Cardiac septum (tissue), 1 donor: ENCODE measurements at regions of chr4 and their contacts with region 1.

Region 1: GRCh38 chr4:8320386-8320750 is 50.8 kb downstream of the HTRA3 start:
- DNase-seq: no peak

Region 2: DNA sequence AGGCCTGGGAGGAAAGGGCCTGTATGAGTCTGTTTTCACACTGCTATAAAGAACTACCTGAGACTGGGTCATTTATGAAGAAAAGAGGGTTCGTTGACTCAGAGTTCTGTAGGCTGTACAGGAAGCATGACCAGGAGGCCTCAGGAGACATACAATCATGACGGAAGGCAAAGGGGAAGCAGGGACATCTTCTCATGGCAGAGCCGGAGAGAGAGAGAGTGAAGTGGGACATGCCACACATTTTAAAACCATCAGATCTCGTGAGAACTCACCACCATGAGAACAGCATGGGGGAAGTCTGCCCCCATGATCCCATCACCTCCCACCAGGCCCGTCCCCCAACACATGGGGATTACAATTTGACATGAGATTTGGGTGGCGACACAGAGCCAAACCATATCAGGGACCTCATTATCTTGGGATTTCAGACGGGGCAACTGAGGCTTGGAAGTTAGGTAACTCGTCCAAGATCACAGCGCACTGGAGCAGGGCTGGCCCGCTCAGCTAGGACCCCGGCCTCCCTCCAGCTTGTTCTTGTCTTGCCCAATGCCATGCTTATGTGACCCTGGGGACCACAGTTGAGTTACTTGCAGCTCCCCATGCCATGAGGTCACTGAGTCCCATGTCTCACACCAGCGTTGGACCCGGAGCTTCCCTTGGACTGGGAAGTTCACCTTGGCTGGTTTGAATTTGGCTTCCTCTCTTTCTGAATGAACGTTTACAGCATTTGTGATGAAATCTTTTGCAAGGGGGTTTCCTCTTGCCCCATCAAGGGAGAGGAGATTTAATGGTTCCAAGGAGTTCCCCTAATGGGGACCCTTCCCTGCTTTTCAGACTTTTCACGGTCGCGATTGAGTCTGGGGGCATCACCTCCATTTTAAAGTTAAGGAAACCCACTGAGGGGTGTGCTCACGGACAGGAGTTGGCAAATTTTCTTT is 32.8 kb before region 1 on chr4:
- intact Hi-C with region 1: loop called (anchors 1 kb)
- DNase-seq: no peak

Region 3: DNA sequence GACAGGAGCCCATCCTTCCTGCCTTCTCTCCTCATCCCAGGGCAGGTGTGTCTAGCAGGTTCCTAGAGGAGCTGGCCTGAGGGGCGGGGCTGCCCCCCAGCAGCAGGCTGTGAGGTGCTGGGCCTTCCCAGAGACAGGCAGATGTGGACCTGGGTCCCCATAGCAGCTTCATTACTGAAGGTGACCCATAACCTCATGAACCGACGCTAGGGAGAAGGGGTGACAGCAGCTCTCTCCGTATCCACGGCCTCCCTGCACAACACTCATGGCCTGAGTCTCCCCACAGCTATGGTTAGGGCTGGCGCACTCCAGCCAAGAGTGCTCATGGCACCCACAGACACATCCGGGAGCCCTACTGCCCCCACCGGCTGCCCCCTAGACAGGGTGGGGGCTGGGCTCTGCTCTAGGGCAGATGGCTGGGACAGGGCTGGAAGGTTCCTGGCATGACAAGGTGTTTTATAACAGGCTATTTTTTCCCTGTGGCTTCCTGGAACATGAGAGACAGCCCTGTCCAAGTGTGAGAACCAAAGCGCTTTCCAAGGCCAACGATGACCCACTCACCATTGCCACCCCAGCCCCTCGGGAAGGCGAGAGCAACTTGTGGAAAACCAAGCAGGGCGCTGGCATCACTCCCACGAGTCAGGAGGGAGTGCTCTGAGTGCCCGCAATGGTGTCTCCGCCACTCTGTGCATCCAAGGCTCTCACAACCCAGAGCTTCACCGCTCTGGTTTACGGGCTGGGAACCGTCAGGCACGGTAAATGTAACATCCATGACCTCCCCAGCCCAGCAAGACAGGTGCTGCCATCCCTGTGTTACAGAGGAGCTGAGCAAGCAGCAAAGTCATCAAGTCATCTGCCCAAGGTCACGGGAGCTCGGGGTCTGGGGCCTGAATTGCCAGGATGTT is 60.4 kb after region 1 on chr4:
- intact Hi-C with region 1: loop called (anchors 1 kb)
- DNase-seq: peak; percentile 84

Region 4: GRCh38 chr4:8391972-8392371 is 71.6 kb after region 1 on chr4:
- intact Hi-C with region 1: loop called (anchors 2 kb)
- DNase-seq: no peak

Region 5: DNA sequence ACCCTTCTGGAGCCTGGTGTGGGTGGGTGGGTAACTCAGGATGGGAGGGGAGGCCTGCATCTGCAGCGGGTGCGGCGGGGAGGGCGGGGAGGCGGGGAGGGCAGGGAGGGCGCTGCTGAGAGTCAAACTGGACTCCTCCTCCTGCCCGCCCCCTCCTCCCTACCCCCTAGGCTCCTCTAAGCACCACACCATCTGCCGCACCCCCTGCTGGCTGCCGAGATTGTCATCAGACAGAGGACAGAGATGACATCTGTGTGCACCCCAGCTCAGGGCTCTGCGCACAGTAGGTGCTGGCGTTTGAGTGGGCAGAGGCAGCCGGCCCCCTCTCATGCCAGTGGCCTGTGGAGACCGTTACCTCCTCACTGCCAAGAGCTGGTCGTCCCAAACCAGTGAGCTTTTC is 561.9 kb after region 1 on chr4:
- intact Hi-C with region 1: no loop called
- DNase-seq: no peak